ENCODE measurements at regions of chr10 and their contacts with region 1.

Region 1: GRCh38 chr10:98467506-98468346 is 21.0 kb upstream of the HPS1 start:
- DNase-seq: peak; percentile 69 to 82
- H3K4me3 ChIP-seq: peak overlapping the region; percentile 49 to 62
- H3K27ac ChIP-seq: peak overlapping the region in 1 of 2 donors; percentile 1
- H3K4me1 ChIP-seq: peaks cover 0 to 7% (median 2%) of the 10 kb centered on the region in 4 donors
- H3K27me3 ChIP-seq: no peaks in the 10 kb centered on the region
- CTCF ChIP-seq: peak; percentile 81 to 88

Region 2: GRCh38 chr10:98486421-98486820 is 18.7 kb after region 1 on chr10:
- intact Hi-C with region 1: no loop called
- DNase-seq: no peak
- H3K4me3 ChIP-seq: no peak overlapping the region
- H3K27ac ChIP-seq: no peak overlapping the region
- H3K4me1 ChIP-seq: no peaks in the 10 kb centered on the region
- H3K27me3 ChIP-seq: no peaks in the 10 kb centered on the region
- CTCF ChIP-seq: no peak

Region 3: DNA sequence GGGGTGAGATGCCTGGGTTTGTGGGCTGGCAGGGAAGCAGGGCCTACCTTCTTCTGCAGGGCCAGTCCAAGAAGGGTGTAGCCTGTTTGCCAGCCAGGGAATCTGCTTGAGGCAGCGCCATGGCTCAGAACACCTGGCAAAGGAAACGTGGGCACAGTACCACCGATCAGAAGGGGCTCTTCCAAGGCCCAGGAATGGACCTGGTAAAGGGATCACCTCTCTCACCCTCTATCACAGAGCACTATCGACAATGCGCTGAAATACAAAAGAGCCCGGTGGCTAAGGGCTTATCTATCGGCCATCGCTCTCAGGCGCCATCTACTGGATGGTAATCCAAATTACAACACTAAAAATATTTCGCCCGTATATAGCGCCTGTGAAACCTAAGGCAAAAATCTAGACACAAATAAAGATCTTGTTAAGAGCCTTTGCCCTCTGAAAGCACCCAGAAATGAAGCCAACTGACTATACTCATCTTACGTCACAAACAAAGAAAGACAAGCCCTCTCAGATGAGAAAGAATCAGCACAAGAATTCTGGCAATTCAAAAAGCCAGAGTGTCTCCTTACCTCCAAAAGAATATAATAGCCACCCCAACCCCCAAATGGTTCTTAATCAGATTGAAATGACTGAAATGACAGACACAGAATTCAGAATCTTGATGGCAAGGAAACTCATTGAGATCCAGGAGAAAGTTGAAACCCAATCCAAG is 196.8 kb after region 1 on chr10:
- intact Hi-C with region 1: loop called (anchors 10 kb)
- DNase-seq: no peak
- H3K4me3 ChIP-seq: no peak overlapping the region
- H3K27ac ChIP-seq: no peak overlapping the region
- H3K4me1 ChIP-seq: no peaks in the 10 kb centered on the region
- H3K27me3 ChIP-seq: no peaks in the 10 kb centered on the region
- CTCF ChIP-seq: peak; percentile 36 to 51

Region 4: DNA sequence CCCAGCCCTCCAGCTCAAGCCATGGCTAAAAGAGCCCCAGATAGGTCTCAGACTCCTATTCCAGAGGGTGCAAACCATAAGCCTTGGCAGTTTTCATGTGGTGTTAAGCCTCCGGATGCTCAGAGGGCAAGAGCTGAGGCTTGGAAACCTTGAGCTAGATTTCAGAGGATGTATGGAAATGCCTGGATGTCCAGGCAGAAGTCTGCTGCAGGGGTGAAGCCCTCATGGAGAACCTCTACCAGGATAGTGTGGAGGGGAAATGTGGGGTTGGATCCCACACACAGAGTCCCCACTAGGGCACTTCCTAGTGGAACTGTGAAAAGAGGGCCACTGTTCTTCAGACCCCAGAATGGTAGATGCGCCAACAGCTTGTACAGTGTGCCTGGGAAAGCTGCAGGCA is 781.1 kb after region 1 on chr10:
- intact Hi-C with region 1: loop called (anchors 5 kb)
- DNase-seq: no peak
- H3K4me3 ChIP-seq: no peak overlapping the region
- H3K27ac ChIP-seq: no peak overlapping the region
- H3K4me1 ChIP-seq: peaks cover 0 to 7% (median 0%) of the 10 kb centered on the region in 4 donors
- H3K27me3 ChIP-seq: peaks cover 0 to 6% of the 10 kb centered on the region in 2 donors
- CTCF ChIP-seq: no peak